ENCODE measurements at regions of chr6 and their contacts with region 1.

Region 1: DNA sequence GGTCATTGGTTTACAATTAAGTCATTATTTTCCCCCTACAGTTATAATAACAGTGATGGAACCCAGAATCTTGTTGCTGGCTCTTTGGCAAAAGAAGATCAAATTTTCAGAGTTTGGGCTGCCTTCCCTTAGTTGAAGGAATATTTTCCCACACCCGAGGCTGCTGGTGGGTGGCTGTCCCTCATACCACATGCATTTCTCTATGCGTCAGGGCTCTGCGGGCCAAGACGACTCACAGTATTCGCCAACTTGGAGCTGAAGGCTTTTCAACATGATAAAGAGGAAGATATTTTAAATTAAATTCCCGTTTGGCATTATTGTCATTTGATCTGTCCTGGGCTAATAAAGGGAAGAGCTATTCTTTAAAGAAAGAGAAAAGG is 102.2 kb upstream of the SASH1 start:
- DNase-seq: peak in 1 of 2 donors; percentile 72
- H3K4me3 ChIP-seq: no peak overlapping the region
- H3K27ac ChIP-seq: peak overlapping the region; percentile 42 to 70
- H3K4me1 ChIP-seq: peaks cover 0 to 39% of the 10 kb centered on the region in 2 donors
- H3K27me3 ChIP-seq: no peaks in the 10 kb centered on the region
- CTCF ChIP-seq: no peak

Region 2: GRCh38 chr6:148192310-148192709 is 48.1 kb before region 1 on chr6:
- intact Hi-C with region 1: loop called (anchors 5 kb)
- DNase-seq: no peak
- H3K4me3 ChIP-seq: no peak overlapping the region
- H3K27ac ChIP-seq: peak overlapping the region in 1 of 2 donors; percentile 29
- H3K4me1 ChIP-seq: peaks cover 3% of the 10 kb centered on the region in 2 donors
- H3K27me3 ChIP-seq: no peaks in the 10 kb centered on the region
- CTCF ChIP-seq: no peak

Region 3: DNA sequence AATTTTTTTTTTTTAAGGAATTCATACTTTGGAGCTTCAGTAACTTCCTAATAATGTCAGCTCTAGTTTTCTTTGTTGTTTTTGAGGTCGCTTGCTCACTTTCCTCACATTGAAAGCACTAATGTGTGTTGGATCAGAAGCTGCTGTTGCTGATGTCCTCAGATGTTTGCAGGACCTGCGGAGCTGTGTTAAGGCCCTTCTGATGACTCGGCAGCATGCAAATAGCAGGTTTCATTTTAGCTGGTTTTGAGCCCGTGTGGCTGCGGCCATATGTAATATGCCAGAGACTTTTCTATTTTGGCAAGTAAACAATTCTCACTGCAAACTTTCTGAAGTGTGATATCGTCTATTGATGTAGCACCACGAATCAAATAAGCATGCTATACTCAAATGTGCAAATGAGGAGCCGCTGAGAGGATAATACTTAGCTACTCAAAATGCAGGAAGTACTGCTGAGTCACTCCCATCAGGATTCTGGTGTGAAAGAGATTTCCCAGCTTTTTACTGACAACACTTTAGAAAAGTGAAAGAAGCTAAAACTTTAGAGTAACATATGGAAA is 290.0 kb after region 1 on chr6:
- intact Hi-C with region 1: loop called (anchors 2 kb)
- DNase-seq: peak in 1 of 2 donors; percentile 80
- H3K4me3 ChIP-seq: peak overlapping the region in 1 of 2 donors; percentile 51
- H3K27ac ChIP-seq: peak overlapping the region; percentile 77
- H3K4me1 ChIP-seq: peaks cover 0 to 22% of the 10 kb centered on the region in 2 donors
- H3K27me3 ChIP-seq: no peaks in the 10 kb centered on the region
- CTCF ChIP-seq: no peak

Measured in ascending aorta (tissue), 2 donors.